PC-9 (cell line): ENCODE measurements at regions of chr6 and their contacts with region 1.

Region 1: GRCh38 chr6:125191916-125192609 is 38.5 kb downstream of the TPD52L1 start:
- DNase-seq: peak; percentile 63 to 66
- H3K4me3 ChIP-seq: no peak overlapping the region
- H3K27ac ChIP-seq: peak overlapping the region; percentile 67
- H3K4me1 ChIP-seq: peaks cover 55% of the 10 kb centered on the region
- H3K27me3 ChIP-seq: no peaks in the 10 kb centered on the region
- CTCF ChIP-seq: peak; percentile 85

Region 2: DNA sequence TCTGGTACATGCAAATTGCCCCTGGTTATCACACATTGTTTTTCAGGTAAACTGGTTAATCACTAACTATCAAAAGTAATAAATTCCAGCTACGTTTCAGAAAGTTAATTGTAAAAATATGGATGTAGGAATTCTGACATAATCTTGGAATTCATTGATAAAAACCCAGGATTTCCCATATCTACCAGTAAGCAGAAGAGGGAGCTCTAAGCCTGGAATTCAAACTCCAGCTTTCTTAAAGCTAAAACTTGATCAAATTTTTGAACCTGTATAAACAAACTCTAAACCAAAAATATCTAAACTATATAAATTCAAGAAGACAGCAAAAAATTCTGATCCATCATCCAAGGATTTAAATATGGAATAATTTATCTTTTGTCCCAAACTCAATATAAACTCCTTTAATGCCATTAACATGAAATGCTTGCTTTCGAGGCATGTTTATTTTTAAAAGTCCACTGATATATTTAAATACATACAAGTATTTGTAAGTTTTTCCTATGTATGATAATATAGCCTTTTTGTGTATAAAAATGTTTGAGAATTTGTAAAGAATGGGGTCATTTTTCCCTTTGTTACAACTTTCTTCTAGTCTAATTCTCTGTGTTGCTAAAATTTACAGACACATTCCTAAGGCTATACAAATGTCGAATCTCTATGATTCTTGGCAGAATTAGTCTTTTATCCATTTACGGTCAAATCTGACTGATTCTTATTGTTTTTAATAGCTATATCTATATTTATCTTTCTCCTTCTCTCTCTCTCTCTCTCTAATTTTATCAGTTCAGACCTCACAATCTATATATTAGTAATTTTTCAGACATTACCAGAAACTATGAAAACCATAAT is 321.2 kb before region 1 on chr6:
- CTCF ChIA-PET with region 1: interaction called, 14 read pairs
- POLR2A ChIA-PET with region 1: no interaction called
- intact Hi-C with region 1: no loop called
- DNase-seq: no peak
- H3K4me3 ChIP-seq: no peak overlapping the region
- H3K27ac ChIP-seq: no peak overlapping the region
- H3K4me1 ChIP-seq: no peaks in the 10 kb centered on the region
- H3K27me3 ChIP-seq: no peaks in the 10 kb centered on the region
- CTCF ChIP-seq: peak; percentile 92

Region 3: DNA sequence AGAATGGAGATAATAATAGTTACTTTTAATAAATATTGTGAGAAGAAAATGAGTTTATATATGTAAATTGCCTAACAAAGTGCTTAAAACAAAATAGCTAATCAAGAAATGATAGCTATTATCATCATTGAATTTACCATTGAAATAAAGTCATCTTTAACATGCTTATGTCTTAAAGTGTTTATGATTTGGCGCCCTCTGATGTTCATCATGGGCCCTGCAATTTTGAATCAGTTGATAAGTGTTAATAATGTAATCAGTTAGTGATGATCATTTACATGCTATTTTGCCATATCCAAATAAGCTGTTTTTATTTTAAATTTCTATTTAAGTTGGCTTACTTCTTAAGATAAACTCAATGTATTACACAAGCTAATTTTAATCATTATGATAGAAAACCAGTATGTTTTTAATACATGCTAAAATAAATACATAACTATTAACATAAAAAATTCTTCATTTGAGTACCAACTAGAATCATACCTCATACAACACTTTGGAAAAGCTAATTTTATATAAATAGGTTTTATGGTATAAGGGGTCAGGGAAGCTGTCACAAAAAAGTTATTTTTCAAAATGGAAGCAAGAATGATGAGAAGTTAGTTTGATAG is 77.7 kb before region 1 on chr6:
- CTCF ChIA-PET with region 1: no interaction called
- POLR2A ChIA-PET with region 1: no interaction called
- intact Hi-C with region 1: loop called (anchors 2 kb)
- DNase-seq: peak; percentile 38 to 57
- H3K4me3 ChIP-seq: no peak overlapping the region
- H3K27ac ChIP-seq: no peak overlapping the region
- H3K4me1 ChIP-seq: no peaks in the 10 kb centered on the region
- H3K27me3 ChIP-seq: no peaks in the 10 kb centered on the region
- CTCF ChIP-seq: peak; percentile 98

Region 4: GRCh38 chr6:125245523-125246260 is 53.6 kb after region 1 on chr6:
- CTCF ChIA-PET with region 1: no interaction called
- POLR2A ChIA-PET with region 1: no interaction called
- intact Hi-C with region 1: loop called (anchors 2 kb)
- DNase-seq: peak; percentile 76 to 86
- H3K4me3 ChIP-seq: peak overlapping the region; percentile 0; the same call in 1 of the 2 replicates
- H3K27ac ChIP-seq: peak overlapping the region; percentile 60
- H3K4me1 ChIP-seq: peaks cover 32% of the 10 kb centered on the region
- H3K27me3 ChIP-seq: no peaks in the 10 kb centered on the region
- CTCF ChIP-seq: no peak

Region 5: GRCh38 chr6:125273965-125274364 is 81.9 kb after region 1 on chr6:
- CTCF ChIA-PET with region 1: interaction called, 4 read pairs
- POLR2A ChIA-PET with region 1: no interaction called
- intact Hi-C with region 1: loop called (anchors 2 kb)
- DNase-seq: peak; percentile 87 to 96
- H3K4me3 ChIP-seq: no peak overlapping the region
- H3K27ac ChIP-seq: peak overlapping the region; percentile 71
- H3K4me1 ChIP-seq: peaks cover 20% of the 10 kb centered on the region
- H3K27me3 ChIP-seq: no peaks in the 10 kb centered on the region
- CTCF ChIP-seq: no peak

Region 6: GRCh38 chr6:125944434-125944816 is 752.4 kb after region 1 on chr6:
- CTCF ChIA-PET with region 1: no interaction called
- POLR2A ChIA-PET with region 1: no interaction called
- intact Hi-C with region 1: loop called (anchors 10 kb)
- DNase-seq: peak; percentile 19 to 36
- H3K4me3 ChIP-seq: no peak overlapping the region
- H3K27ac ChIP-seq: peak overlapping the region; percentile 98
- H3K4me1 ChIP-seq: peaks cover 97% of the 10 kb centered on the region
- H3K27me3 ChIP-seq: no peaks in the 10 kb centered on the region
- CTCF ChIP-seq: no peak